ENCODE measurements at regions of chr2 and their contacts with region 1.

Region 1: GRCh38 chr2:189783927-189784867 is at the starts of genes ORMDL1 and PMS1:
- DNase-seq: peak; percentile 92 to 99 (median 96)
- H3K4me3 ChIP-seq: peak within 1 kb of the TSS; percentile 56 to 99 (median 88)
- H3K27ac ChIP-seq: peak within 1 kb of the TSS; percentile 63 to 98 (median 93)
- H3K27me3 ChIP-seq: no peaks in the 10 kb centered on the region
- CTCF ChIP-seq: peak in 35 of 56 donors; percentile 3 to 56 (median 30)
- total RNA-seq, gene ORMDL1: 31.6 to 78.1 (median 54.7) TPM
- total RNA-seq, gene PMS1: 29.0 to 64.7 (median 45.8) TPM

Region 2: GRCh38 chr2:189762551-189763298 is 21.5 kb before region 1 on chr2 and contains the start of gene OSGEPL1:
- intact Hi-C with region 1: loop called (anchors 1 kb)
- DNase-seq: peak; percentile 93 to 97 (median 96)
- H3K4me3 ChIP-seq: peak within 1 kb of the TSS; percentile 61 to 98 (median 85)
- H3K27ac ChIP-seq: peak within 1 kb of the TSS; percentile 68 to 99 (median 95)
- H3K27me3 ChIP-seq: no peaks in the 10 kb centered on the region
- CTCF ChIP-seq: peak; percentile 31 to 76 (median 58)
- total RNA-seq, gene OSGEPL1: 5.5 to 18.6 (median 9.7) TPM

Region 3: GRCh38 chr2:190149908-190150307 is 365.7 kb after region 1 on chr2:
- intact Hi-C with region 1: no loop called
- DNase-seq: no peak
- H3K4me3 ChIP-seq: no peak overlapping the region
- H3K27ac ChIP-seq: no peak overlapping the region
- H3K27me3 ChIP-seq: no peaks in the 10 kb centered on the region
- CTCF ChIP-seq: no peak

Region 4: DNA sequence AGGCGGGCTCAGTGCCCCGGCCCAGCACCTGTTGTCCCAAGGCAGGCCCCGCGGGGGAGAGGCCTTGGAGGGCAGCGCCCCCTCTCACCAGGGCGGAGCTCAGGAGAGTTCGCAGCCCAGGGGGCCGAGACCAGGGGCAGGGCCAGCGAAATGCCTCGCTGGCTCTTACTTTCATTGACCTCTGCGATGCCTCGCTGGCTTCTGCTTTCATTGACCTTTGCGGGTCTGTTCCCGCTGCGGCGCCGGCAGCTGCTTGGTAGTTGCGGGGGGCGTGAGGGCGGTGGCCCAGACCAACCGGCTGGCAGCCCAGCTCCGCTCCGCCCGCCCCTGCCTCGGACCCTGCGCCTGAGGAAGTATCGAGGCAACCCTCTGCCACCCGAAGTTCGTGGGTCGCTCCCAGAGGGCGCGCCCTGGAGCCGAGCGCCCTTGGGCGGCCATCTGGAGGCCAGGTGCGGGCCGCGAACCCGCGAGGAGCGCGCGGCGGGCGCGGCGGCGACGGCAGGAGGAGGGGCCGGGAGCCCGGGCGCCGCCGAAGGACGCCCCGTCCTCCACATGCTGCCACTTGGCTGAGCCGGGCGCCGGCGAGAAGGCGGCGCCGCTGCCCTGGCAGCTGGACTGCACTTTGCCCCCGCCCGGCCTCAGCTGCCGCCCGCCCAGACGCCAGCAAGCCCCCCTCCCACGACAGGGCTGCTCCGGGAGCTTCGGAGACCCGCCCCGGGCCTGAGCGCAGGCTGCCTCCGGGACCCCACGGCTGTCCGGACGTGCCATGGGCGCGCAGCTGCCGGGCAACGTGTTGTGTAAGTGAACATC is 396.3 kb after region 1 on chr2:
- intact Hi-C with region 1: loop called in 1 of 2 experiments (anchors 10 kb)
- DNase-seq: peak; percentile 6 to 76 (median 57)
- H3K4me3 ChIP-seq: peak overlapping the region; percentile 52 to 92 (median 73)
- H3K27ac ChIP-seq: peak overlapping the region; percentile 70 to 99 (median 96)
- H3K27me3 ChIP-seq: no peaks in the 10 kb centered on the region
- CTCF ChIP-seq: peak in 50 of 56 donors; percentile 25 to 73 (median 56)

Region 5: DNA sequence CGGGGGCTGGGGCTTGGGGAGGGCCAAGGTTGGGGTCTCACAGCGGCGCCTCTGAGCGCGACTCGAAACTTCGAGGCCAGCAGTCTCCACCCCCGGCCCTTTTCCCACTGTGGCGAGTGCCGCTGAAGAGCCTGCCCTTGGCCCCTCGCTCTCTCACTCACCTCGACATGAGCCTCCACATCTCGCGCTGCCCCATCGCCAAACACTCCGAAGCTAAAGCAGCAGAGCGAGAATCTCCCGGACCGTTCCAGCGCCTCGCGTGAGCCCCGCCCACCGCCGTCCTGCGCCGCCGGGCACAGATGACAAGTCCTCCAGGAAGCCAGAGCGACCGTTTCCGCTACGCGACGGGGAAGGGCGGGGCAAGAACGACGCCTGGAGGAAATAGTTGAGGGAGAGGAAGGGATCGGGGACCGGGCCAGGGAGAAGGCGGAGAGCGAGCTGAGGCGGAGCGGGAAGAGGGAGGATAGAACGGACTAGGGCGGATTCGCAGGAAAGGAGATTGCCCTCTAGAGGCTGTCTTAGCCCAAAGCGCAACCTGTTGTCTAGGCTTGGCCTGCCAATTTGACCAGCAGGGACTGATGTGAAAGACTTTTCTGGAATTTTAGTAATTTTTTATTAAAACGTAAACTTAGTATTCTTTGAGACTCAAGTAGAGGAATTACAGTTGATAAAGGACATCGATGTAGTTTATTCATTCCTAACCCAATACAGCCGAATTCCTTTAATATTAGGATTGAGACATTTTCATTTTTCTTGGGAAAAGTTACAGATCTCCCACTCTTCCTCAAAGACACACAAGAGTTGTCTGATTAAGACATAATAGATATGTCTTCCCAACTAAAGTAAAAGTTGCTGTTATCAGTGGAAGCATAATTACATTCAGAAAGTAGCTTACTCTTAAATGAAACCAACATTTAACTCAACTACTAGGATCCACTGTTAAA is 535.6 kb after region 1 on chr2 and contains the start of gene HIBCH:
- intact Hi-C with region 1: loop called in 1 of 2 experiments (anchors 10 kb)
- DNase-seq: peak; percentile 95 to 99 (median 98)
- H3K4me3 ChIP-seq: peak within 1 kb of the TSS; percentile 67 to 93 (median 81)
- H3K27ac ChIP-seq: peak within 1 kb of the TSS in 58 of 59 donors; percentile 82 to 99 (median 94)
- H3K27me3 ChIP-seq: no peaks in the 10 kb centered on the region
- CTCF ChIP-seq: peak; percentile 71 to 97 (median 90)
- total RNA-seq, gene HIBCH: 29.2 to 189 (median 49.2) TPM

Region 6: GRCh38 chr2:191013932-191014652 is 1229.9 kb after region 1 on chr2 and contains the start of gene STAT1:
- intact Hi-C with region 1: loop called in 1 of 2 experiments (anchors 10 kb)
- DNase-seq: peak; percentile 84 to 97 (median 91)
- H3K4me3 ChIP-seq: peak within 1 kb of the TSS; percentile 65 to 100 (median 91)
- H3K27ac ChIP-seq: peak within 1 kb of the TSS; percentile 61 to 99 (median 95)
- H3K27me3 ChIP-seq: no peaks in the 10 kb centered on the region
- CTCF ChIP-seq: peak in 40 of 56 donors; percentile 7 to 61 (median 28)
- total RNA-seq, gene STAT1: 23.0 to 286 (median 57.5) TPM